ENCODE measurements at regions of chr2 and their contacts with region 1.

Region 1: DNA sequence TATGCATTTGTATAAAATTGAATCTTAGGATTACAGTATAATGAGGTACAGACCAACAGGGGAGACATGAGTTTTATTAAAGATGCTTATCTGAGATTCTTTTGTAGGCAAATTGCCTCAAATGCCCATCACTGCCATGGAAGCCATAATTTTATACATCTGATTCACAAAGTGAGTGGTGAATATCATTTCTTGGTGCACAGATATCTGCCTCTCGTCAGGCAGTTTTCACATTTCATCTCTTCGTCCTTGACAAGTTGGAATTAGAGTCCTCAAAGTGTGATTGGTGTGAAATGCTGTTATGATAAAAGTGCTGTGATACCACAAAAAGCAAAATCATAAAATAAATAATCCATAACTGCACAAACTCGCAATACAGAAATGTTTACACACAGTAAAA is 1602.8 kb upstream of the DDX18 start:
- DNase-seq: no peak
- ATAC-seq: no peak
- H3K4me3 ChIP-seq: no peak overlapping the region
- H3K4me3 Mint-ChIP-seq: no peak overlapping the region
- H3K27ac ChIP-seq: no peak overlapping the region
- H3K27ac Mint-ChIP-seq: no peak overlapping the region
- H3K4me1 ChIP-seq: no peaks in the 10 kb centered on the region
- H3K4me1 Mint-ChIP-seq: no peaks in the 10 kb centered on the region
- H3K27me3 ChIP-seq: no peaks in the 10 kb centered on the region
- H3K27me3 Mint-ChIP-seq: no peaks in the 10 kb centered on the region

Region 2: GRCh38 chr2:116223912-116224311 is 12.2 kb after region 1 on chr2:
- CTCF ChIA-PET with region 1: no interaction called
- POLR2A ChIA-PET with region 1: no interaction called
- intact Hi-C with region 1: loop called in 1 of 2 experiments (anchors 1 kb)
- DNase-seq: no peak
- ATAC-seq: no peak
- H3K4me3 ChIP-seq: no peak overlapping the region
- H3K4me3 Mint-ChIP-seq: no peak overlapping the region
- H3K27ac ChIP-seq: no peak overlapping the region
- H3K27ac Mint-ChIP-seq: no peak overlapping the region
- H3K4me1 ChIP-seq: no peaks in the 10 kb centered on the region
- H3K4me1 Mint-ChIP-seq: no peaks in the 10 kb centered on the region
- H3K27me3 ChIP-seq: no peaks in the 10 kb centered on the region
- H3K27me3 Mint-ChIP-seq: no peaks in the 10 kb centered on the region

Measured in naive thymus-derived CD4-positive, alpha-beta T cell (primary cell).